CD4-positive, alpha-beta T cell (primary cell): ENCODE measurements at regions of chr1 and their contacts with region 1.

Region 1: DNA sequence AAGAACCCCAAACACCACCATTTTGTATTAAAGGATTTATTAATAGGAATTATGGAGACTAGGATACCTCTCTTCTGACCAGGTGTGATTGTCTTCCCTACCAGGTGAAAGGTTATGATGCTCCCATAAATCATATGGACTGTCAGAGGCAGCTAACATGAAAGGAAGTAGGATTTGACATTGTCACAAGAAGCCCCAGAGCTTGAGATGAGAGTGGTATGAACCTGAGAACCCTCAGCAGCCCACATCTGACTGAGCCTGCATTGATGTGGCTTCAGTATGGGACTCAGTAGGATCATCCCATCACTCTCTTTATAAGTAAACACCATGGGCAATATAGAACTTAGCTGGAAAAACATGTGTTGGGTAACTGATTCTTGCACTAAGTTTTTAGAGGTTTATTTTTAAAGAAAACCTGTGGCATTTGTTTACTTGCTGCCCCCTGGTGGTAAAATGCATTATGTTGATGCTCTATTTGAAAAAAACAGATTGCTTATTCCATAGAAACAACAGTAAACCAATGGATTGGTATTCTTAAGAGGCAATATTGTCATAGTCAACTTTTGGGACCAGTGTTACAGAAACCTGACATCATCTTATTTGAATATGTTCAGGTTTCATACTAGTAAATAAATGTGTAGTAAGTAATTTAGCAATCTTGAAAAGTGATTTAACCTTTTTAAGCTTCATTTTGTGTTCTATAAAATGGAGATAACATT is 16.6 kb upstream of the CACYBP start:
- DNase-seq: peak in 8 of 14 experiments; percentile 25 to 81 (median 52)
- ATAC-seq: peak; percentile 41
- H3K4me3 ChIP-seq: no peak overlapping the region
- H3K4me3 Mint-ChIP-seq: no peak overlapping the region
- H3K27ac ChIP-seq: no peak overlapping the region
- H3K27ac Mint-ChIP-seq: peak overlapping the region; percentile 75
- H3K4me1 ChIP-seq: peaks cover 3% of the 10 kb centered on the region
- H3K4me1 Mint-ChIP-seq: peaks cover 45% of the 10 kb centered on the region
- H3K27me3 ChIP-seq: no peaks in the 10 kb centered on the region
- H3K27me3 Mint-ChIP-seq: no peaks in the 10 kb centered on the region
- CTCF ChIP-seq: peak; percentile 78

Region 2: GRCh38 chr1:174769961-174770549 is 213.1 kb before region 1 on chr1:
- CTCF ChIA-PET with region 1: interaction called, 3 read pairs
- POLR2A ChIA-PET with region 1: no interaction called
- intact Hi-C with region 1: loop called (anchors 1 to 2 kb)
- DNase-seq: peak in 4 of 14 experiments; percentile 28 to 76 (median 70)
- ATAC-seq: peak; percentile 78
- H3K4me3 ChIP-seq: no peak overlapping the region
- H3K4me3 Mint-ChIP-seq: no peak overlapping the region
- H3K27ac ChIP-seq: no peak overlapping the region
- H3K27ac Mint-ChIP-seq: no peak overlapping the region
- H3K4me1 ChIP-seq: no peaks in the 10 kb centered on the region
- H3K4me1 Mint-ChIP-seq: no peaks in the 10 kb centered on the region
- H3K27me3 ChIP-seq: no peaks in the 10 kb centered on the region
- H3K27me3 Mint-ChIP-seq: no peaks in the 10 kb centered on the region
- CTCF ChIP-seq: peak; percentile 84

Region 3: DNA sequence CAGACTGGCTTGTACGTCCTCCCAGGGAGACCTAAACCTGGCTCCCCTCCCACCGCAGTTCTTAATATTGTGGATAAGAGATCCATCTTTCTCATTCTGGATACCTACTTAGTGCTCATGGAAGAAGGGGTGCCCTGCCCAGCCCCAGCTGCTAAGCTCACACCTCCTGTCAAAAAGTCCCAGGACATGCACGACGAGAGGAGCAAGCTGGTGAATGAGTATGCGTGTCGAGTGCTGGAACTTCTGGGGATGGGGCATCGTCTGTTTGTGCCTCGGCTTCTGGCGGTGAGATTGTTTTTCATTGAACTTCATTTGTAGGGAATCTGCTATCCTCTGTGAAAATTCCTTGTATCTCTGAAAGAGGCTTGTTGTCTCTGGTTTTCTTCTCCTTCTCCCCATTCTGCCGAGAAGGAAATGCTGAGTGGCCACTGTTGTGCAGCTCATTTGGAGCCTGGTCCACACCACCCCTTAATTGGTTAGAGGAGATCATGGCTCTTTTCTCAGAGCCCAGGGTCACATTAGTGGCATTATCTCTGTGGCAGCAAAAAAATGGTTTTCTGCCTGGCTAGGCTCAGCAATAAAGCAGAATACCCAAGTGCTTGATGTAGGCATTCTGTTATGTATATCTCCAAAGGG is 182.8 kb before region 1 on chr1:
- CTCF ChIA-PET with region 1: interaction called, 7 read pairs
- POLR2A ChIA-PET with region 1: interaction called, 17 read pairs
- intact Hi-C with region 1: no loop called
- DNase-seq: peak in 9 of 14 experiments; percentile 4 to 48 (median 10)
- ATAC-seq: no peak
- H3K4me3 ChIP-seq: peak overlapping the region; percentile 79
- H3K4me3 Mint-ChIP-seq: no peak overlapping the region
- H3K27ac ChIP-seq: peak overlapping the region; percentile 34 to 57
- H3K27ac Mint-ChIP-seq: no peak overlapping the region
- H3K4me1 ChIP-seq: peaks cover 12% of the 10 kb centered on the region
- H3K4me1 Mint-ChIP-seq: no peaks in the 10 kb centered on the region
- H3K27me3 ChIP-seq: no peaks in the 10 kb centered on the region
- H3K27me3 Mint-ChIP-seq: no peaks in the 10 kb centered on the region
- CTCF ChIP-seq: no peak

Region 4: DNA sequence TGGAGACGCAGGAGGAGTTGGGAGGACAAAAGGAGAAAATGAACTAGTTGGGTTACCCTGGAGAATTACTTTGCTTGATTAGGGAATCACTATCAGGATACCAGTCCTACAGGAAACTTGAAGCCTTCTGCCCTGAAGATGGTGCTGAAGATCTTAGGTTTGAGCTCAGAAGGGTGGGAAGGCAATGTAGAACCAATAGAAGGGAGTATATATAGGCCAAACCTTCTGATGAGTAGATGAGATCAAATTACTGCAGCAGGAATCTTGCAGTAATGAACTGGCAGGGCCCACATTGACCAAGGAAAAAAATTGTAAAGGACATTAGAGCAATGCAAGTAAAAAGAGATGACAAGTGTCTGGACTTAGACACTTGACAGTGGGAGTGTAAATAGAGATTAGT is 99.7 kb before region 1 on chr1:
- CTCF ChIA-PET with region 1: interaction called, 5 read pairs
- POLR2A ChIA-PET with region 1: interaction called, 4 read pairs
- intact Hi-C with region 1: loop called in 1 of 2 experiments (anchors 5 kb)
- DNase-seq: peak in 4 of 14 experiments; percentile 12 to 50 (median 32)
- ATAC-seq: peak; percentile 44
- H3K4me3 ChIP-seq: no peak overlapping the region
- H3K4me3 Mint-ChIP-seq: no peak overlapping the region
- H3K27ac ChIP-seq: no peak overlapping the region
- H3K27ac Mint-ChIP-seq: no peak overlapping the region
- H3K4me1 ChIP-seq: no peaks in the 10 kb centered on the region
- H3K4me1 Mint-ChIP-seq: peaks cover 11% of the 10 kb centered on the region
- H3K27me3 ChIP-seq: no peaks in the 10 kb centered on the region
- H3K27me3 Mint-ChIP-seq: no peaks in the 10 kb centered on the region
- CTCF ChIP-seq: peak; percentile 8